ENCODE measurements at regions of chr5 and their contacts with region 1.

Region 1: DNA sequence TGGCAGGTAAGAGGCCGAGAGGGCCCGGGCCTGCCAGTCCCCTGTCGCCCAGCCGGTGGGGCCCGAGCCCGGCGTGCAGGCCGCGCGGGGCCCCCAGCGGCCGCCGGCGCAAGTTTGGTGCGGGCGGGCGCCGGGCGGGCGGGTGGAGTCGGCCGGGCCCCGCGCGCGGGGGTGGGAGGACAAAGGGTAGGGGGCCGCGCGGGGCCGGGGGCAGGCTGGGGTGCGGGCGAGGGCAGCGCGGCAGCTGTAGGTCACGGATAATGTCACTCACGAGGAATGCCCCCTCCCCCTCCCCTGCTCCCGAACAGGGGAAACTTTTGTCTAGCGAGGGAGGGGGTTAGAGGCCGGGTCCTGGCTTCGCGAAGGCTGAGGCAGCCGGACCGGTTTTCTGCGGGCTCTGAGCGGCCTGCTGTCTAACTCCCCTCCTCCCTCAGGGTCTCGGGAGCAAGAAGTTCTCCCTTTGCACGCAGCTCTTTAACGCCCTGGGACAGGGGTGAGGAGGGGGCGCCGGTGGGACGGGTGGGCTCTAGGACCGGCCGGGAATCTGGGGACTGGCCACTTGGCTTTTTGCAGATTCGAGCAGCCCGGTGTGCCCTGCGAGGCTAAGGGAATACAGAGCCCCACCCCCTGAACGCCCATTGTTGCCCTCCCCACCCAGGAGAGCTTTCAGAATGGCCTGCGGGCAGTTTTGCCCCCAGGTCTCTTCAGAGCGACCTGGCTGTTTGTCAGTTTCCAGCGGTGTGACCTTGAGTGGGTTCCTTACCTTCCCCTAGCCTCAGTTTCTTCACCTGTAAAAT is 21.3 kb upstream of the NDST1 start:
- DNase-seq: peak in 38 of 42 donors; percentile 43 to 84 (median 66)

Region 2: GRCh38 chr5:150161242-150162141 is 325.1 kb before region 1 on chr5:
- intact Hi-C with region 1: no loop called
- DNase-seq: peak; percentile 66 to 92 (median 84)

Region 3: DNA sequence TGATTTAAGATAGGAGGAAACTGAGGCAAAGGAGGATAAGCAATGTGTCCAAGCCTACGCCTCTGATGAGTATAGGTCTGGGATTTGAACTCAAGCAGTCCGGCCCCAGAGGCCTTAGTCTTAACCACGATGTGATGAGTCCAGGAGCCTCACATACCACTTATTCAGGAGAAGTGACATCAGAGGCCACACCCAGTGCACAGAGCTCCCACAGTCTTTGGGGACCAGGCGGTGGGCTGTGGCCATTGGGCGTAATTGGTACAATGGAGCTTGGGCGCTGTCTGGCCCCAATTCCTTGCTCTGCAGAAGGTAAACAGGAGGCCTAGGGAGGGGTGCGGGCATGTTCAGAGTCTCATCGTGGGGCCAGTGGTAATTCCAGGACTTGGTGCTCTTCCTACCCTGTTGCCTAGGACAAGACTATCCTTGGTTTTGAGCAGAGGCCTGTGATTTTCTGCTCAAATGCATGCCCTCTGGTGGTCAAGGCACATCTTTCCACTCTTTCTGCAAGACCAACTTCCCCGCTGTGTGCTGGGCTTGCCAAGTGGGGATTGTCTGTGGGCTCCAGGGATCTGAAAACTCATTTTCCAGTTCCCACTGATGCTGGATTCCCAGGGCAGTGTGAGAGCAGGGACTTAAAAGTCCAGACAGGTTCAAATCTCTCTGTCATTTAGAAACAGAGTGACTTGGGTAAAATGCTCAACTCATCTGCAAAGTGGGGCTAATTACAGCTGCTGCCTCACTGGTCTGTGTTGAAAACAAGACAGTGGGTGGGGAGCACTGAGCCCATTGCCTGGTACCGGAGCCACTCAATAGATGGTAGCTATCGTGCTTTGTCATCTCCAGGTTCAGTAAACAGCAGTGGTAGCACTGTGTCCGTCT is 37.1 kb after region 1 on chr5:
- intact Hi-C with region 1: loop called (anchors 5 kb)
- DNase-seq: peak in 40 of 42 donors; percentile 46 to 89 (median 74)

Measured in head of caudate nucleus (tissue), 42 donors.